Activated T-helper 1 cell treated with anti-CD3 and anti-CD28 coated beads, Interleukin-12 subunit alpha, Interleukin-12 subunit beta, Interleukin-2, Interleukin-4 antibody, amounts not matched to agents 30 ng/mL and 10 ng/mL and 1 ng/mL, durations not matched to agents 14 hours and 24 hours and 36 hours (primary cell): ENCODE measurements at regions of chr1 and their contacts with region 1.

Region 1: DNA sequence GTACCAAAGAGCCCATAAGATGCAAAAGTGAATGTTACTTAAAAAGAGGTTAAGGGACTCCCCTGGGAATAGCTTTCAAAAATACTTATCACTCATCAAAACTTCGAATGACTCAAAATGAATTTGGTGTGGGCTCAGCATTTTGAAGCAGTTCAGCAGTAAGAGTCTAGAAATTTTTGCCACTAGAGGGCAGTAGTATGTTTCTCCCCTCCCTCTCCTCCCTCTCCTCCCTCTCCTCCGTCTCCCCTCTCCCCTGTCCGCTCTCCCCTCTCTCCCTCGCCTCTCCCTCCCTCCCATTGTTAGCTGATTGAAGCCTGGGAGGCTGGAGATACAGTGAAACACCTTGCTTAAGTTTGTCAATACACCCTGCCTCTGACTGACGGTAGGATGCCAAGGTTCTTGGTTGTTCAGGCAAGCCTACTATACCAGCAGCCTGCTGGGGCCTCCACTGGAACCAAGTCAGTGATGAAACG is 70.8 kb upstream of the TENT5C start:
- DNase-seq: peak; percentile 24
- H3K4me3 Mint-ChIP-seq: no peak overlapping the region
- H3K27ac Mint-ChIP-seq: peak overlapping the region; percentile 26
- H3K4me1 Mint-ChIP-seq: peaks cover 16% of the 10 kb centered on the region
- H3K27me3 Mint-ChIP-seq: no peaks in the 10 kb centered on the region

Region 2: DNA sequence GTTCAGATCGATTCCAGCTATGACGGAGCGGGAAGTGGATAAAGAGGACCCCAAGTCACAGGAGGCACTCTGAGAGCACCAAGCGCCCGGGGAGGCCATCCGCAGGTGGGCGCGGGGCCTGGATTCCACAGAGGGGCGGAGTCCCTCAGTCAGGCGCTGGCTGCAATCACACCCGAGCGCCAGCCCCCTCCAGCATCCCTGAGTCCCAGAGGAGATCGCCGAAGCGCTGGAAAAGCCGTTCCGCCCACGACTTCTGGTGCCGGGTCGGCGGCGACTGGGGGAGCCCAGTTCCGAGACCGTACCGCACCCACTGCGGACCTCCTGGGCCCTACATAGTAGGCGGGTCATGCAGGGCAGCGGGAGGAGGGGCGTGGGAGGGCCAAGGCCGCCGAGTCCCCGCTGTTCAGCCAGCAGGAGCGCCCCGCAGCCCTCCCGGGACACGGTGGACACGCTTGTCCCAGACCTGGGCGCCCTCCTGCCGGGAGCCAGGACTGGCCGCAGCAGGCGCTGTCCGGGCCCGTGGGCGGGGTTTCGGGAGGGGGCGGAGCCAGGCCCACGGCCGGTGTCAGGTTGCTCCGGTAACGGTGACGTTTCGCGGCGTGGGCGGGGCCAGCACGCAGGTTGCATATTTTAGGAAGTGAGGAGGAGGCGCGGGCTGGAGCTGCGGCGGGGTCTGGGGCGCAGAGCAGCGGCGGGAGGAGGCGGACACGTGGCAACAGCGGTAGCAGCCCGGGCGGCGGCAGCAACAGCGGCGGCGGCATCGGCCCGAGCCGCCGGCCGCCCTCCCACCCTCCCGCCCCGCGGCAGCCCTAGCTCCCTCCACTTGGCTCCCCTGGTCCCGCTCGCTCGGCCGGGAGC is 1162.2 kb before region 1 on chr1 and contains the start of gene ATP1A1:
- intact Hi-C with region 1: loop called (anchors 10 kb)
- DNase-seq: peak; percentile 95
- H3K4me3 Mint-ChIP-seq: peak within 1 kb of the TSS; percentile 95
- H3K27ac Mint-ChIP-seq: peak within 1 kb of the TSS; percentile 90
- H3K4me1 Mint-ChIP-seq: peaks cover 38% of the 10 kb centered on the region
- H3K27me3 Mint-ChIP-seq: peaks cover 12% of the 10 kb centered on the region
- total RNA-seq, gene ATP1A1: 238 and 240 TPM in 2 replicates

Region 3: DNA sequence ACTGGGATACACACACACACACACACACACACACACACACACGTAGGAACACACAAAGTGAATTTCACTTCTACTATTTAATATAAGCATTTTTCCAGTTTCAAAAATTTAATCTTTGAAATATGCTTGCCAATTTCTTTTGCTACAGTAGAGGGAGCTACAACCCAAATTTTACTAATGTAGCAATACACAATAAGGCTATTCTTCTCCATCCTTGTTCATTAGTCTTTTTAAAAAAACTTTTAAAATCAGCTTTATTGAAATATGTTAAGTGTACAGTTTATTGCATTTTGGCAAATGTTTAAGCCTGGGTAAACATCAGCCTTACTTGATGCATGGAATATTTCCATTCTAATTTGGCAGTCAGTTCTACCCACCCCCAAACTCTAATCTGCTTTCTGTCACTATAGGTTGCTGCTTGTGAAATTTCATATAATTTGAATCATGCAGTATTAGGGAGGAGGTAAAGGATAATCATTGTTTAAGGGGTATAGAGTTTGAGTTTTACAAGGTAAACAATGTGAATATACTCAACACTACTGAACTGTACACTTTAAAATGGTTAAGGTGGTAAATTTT is 22.2 kb before region 1 on chr1:
- intact Hi-C with region 1: loop called (anchors 2 kb)
- DNase-seq: no peak
- H3K4me3 Mint-ChIP-seq: no peak overlapping the region
- H3K27ac Mint-ChIP-seq: no peak overlapping the region
- H3K4me1 Mint-ChIP-seq: peaks cover 6% of the 10 kb centered on the region
- H3K27me3 Mint-ChIP-seq: no peaks in the 10 kb centered on the region

Region 4: DNA sequence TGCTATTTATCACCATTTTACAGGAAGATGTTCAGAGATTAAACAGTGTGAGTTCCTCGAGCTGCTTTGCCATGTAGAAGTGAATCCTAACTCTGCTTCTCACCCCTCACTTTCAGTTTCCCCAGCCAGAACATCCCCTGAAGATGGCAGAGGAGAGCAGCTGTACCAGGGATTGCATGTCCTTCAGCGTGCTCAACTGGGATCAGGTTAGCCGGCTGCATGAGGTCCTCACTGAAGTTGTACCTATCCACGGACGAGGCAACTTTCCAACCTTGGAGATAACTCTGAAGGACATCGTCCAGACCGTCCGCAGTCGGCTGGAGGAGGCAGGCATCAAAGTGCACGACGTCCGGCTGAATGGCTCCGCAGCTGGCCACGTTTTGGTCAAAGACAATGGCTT is 87.7 kb after region 1 on chr1:
- intact Hi-C with region 1: no loop called
- DNase-seq: no peak
- H3K4me3 Mint-ChIP-seq: no peak overlapping the region
- H3K27ac Mint-ChIP-seq: no peak overlapping the region
- H3K4me1 Mint-ChIP-seq: peaks cover 31% of the 10 kb centered on the region
- H3K27me3 Mint-ChIP-seq: peaks cover 3% of the 10 kb centered on the region

Region 5: GRCh38 chr1:117654493-117655219 is 119.6 kb after region 1 on chr1:
- intact Hi-C with region 1: loop called (anchors 1 kb)
- DNase-seq: no peak
- H3K4me3 Mint-ChIP-seq: peak overlapping the region; percentile 80
- H3K27ac Mint-ChIP-seq: peak overlapping the region; percentile 87
- H3K4me1 Mint-ChIP-seq: peaks cover 80% of the 10 kb centered on the region
- H3K27me3 Mint-ChIP-seq: peaks cover 13% of the 10 kb centered on the region

Region 6: GRCh38 chr1:117674521-117675397 is 139.7 kb after region 1 on chr1:
- intact Hi-C with region 1: loop called (anchors 1 kb)
- DNase-seq: peak; percentile 42
- H3K4me3 Mint-ChIP-seq: no peak overlapping the region
- H3K27ac Mint-ChIP-seq: no peak overlapping the region
- H3K4me1 Mint-ChIP-seq: peaks cover 18% of the 10 kb centered on the region
- H3K27me3 Mint-ChIP-seq: peaks cover 18% of the 10 kb centered on the region

Region 7: DNA sequence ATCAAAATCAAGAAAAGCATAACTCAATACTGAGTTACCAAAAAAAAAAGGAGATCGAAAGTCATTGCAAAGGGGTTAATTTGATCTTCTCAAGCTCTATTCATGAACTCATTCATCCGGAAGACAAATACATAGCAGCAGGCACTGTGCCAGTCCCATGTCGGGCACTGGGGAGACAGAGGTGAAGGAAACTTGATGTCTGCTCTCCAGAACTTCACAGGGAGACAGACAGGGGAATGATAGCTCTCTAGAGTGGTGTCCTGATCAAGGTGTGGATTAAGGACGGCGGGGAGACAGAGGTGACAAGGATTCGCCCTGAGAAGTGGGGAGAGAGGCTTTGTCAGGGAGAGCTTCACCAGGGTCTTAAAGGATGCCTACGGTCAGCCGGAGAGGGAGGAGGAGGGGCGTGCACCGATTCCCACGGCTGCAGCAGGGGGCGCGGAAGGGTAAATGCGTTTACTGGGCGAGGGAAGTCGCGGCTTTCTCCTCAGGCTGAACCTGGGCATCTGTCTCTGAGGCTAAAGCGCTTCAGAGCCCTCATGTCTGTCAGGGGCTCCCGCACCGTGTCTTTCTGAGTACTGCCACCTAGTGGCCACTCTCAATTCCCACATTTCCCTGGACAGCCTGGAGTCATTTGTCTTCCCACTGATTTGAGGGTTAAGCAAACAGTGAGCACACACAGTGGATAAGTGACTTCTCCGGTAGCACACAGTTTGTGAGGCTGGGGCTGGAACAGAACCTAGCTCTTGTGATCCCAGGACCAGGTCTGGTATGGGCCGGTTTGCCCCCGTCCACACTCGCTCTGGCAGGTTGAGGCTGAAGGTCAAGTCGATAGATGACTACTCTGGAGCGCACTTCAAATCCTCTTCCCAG is 223.6 kb after region 1 on chr1:
- intact Hi-C with region 1: loop called (anchors 1 kb)
- DNase-seq: peak; percentile 51
- H3K4me3 Mint-ChIP-seq: peak overlapping the region; percentile 68
- H3K27ac Mint-ChIP-seq: no peak overlapping the region
- H3K4me1 Mint-ChIP-seq: peaks cover 13% of the 10 kb centered on the region
- H3K27me3 Mint-ChIP-seq: peaks cover 45% of the 10 kb centered on the region

Region 8: GRCh38 chr1:117929173-117929989 is 394.4 kb after region 1 on chr1 and contains the starts of genes GDAP2 and WDR3:
- intact Hi-C with region 1: loop called (anchors 1 kb)
- DNase-seq: peak; percentile 96
- H3K4me3 Mint-ChIP-seq: peak within 1 kb of the TSS; percentile 96
- H3K27ac Mint-ChIP-seq: peak within 1 kb of the TSS; percentile 89
- H3K4me1 Mint-ChIP-seq: peaks cover 46% of the 10 kb centered on the region
- H3K27me3 Mint-ChIP-seq: no peaks in the 10 kb centered on the region
- total RNA-seq, gene GDAP2: 21.4 and 29.0 TPM in 2 replicates
- total RNA-seq, gene WDR3: 68.3 and 72.8 TPM in 2 replicates